HAP-1 (cell line): ENCODE measurements at regions of chrX and their contacts with region 1.

Region 1: DNA sequence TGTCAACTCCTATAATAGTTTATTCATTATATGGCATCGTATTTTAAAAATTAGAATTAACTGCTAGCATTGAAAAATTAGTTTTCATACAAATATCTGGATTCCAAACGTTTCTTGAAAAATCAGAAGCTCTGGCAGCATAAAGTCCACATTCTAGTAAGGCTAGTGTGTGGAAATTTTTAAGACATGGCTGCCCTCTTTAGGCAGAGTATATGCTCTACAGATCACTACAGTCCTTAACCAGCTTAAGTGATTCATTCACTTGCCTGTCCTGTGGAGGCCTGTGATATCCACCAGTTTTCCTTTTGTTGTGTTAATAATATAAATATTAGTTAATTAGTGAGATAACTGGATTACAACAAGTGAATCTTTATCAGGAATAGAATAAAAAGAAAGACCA is 287.2 kb downstream of the OPHN1 start:
- DNase-seq: peak; percentile 15 to 63
- H3K4me3 ChIP-seq: no peak overlapping the region
- H3K4me1 ChIP-seq: no peaks in the 10 kb centered on the region
- H3K27me3 ChIP-seq: no peaks in the 10 kb centered on the region

Region 2: DNA sequence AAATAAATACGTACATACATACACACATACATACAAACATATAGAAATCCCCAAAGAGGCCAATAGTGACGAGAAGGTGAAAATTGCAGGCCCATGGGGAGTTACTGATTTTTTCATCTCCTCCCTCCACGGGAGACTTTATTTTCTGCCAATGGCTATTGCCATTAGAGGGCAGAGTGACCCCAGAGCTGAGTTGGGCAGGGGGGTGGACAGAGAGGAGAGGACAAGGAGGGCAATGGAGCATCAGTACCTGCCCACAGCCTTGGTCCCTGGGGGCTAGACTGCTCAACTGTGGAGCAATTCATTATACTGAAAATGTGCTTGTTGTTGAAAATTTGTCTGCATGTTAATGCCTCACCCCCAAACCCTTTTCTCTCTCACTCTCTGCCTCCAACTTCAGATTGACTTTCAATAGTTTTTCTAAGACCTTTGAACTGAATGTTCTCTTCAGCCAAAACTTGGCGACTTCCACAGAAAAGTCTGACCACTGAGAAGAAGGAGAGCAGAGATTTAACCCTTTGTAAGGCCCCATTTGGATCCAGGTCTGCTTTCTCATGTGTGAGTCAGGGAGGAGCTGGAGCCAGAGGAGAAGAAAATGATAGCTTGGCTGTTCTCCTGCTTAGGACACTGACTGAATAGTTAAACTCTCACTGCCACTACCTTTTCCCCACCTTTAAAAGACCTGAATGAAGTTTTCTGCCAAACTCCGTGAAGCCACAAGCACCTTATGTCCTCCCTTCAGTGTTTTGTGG is 421.5 kb before region 1 on chrX:
- in situ Hi-C with region 1: loop called (anchors 25 kb)
- DNase-seq: no peak
- H3K4me3 ChIP-seq: no peak overlapping the region
- H3K4me1 ChIP-seq: no peaks in the 10 kb centered on the region
- H3K27me3 ChIP-seq: no peaks in the 10 kb centered on the region

Region 3: GRCh38 chrX:67780694-67781109 is 365.4 kb before region 1 on chrX:
- in situ Hi-C with region 1: loop called (anchors 25 kb)
- DNase-seq: peak in 1 of 2 experiments; percentile 21
- H3K4me3 ChIP-seq: no peak overlapping the region
- H3K4me1 ChIP-seq: no peaks in the 10 kb centered on the region
- H3K27me3 ChIP-seq: no peaks in the 10 kb centered on the region

Region 4: DNA sequence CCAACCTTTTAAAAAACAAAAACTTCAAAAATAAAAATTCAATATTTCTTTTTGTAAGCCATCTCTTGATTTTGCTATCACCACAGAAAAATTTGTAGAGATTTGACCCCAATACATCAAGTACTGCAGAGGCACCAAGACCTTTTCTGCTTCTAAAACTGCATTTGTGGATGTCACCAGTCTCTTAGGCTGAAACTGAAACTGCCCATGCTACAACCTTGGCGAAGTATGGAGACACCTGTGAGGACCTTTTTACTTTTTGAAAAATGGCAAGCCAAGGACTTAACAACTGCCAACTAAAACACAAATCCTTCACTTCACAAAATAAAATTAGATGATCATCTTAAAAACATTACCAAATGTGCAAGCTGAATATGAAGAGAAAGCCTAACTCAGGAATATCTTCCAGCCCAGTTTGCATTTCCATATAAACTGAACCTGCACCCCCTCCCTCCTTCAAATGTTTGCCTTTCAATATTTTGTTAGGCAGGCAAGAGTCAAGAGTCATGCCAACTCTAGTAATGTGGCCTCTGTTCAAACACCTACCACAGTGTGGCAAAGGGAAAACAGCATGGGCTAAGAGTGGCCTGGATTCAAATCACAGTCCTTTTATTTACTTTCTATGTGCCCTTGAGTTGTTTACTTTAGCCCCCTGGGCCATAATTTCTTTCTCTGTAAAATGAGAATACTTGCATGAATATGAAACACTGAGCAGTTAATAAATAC is 102.2 kb before region 1 on chrX:
- in situ Hi-C with region 1: loop called (anchors 10 kb)
- DNase-seq: no peak
- H3K4me3 ChIP-seq: no peak overlapping the region
- H3K4me1 ChIP-seq: peaks cover 10% of the 10 kb centered on the region
- H3K27me3 ChIP-seq: no peaks in the 10 kb centered on the region

Region 5: GRCh38 chrX:69289046-69289792 is 1143.2 kb after region 1 on chrX:
- in situ Hi-C with region 1: no loop called
- DNase-seq: no peak
- H3K4me3 ChIP-seq: no peak overlapping the region
- H3K4me1 ChIP-seq: peaks cover 21% of the 10 kb centered on the region
- H3K27me3 ChIP-seq: no peaks in the 10 kb centered on the region